ENCODE measurements at regions of chr19 and their contacts with region 1.

Region 1: DNA sequence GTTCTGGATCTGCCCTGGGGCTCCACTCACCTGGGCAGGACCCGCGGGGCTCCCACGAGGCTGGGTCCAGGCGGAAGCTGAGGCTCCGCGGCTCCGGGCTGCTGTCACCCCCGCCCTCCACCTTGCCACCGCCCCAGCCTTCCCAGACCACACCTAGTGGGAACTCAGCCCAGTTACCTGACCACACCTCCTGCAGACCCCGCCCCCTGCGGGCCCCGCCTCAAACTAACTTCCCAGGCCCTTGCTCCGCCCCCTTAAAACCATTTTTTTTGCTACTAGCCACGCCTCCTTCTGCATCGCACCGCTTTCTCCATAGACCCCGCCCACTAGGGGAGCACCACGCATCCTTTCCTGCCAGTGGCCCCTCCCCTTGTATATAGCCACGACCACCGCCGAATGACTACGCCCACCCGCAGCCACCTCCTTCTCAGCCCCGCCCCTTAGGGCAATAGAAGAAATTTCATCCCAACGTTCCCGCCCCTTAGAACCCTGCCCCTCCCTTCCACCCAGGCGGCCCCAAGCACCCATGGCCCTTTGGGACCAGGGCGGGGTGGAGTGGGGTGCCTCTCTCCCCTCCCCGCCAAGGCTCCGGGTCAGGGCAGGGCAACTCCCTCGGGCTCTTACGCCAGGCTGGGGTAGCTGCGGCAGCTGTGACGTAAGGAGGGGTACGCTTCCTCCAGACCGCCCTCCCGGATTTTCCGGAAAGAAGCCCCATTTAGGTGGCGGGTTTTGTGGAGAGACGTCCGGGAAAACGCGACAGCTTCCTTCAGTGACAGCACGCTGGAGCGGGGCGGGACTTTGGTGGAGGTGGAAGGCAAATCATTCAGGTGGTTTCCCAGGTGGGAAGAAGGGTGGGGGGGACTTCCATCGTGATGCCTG is at the start of gene SH2D3A:
- DNase-seq: peak; percentile 97
- H3K4me3 Mint-ChIP-seq: peak within 1 kb of the TSS; percentile 86
- H3K27ac Mint-ChIP-seq: peak within 1 kb of the TSS; percentile 90
- H3K4me1 Mint-ChIP-seq: peaks cover 60% of the 10 kb centered on the region
- H3K27me3 Mint-ChIP-seq: no peaks in the 10 kb centered on the region

Region 2: DNA sequence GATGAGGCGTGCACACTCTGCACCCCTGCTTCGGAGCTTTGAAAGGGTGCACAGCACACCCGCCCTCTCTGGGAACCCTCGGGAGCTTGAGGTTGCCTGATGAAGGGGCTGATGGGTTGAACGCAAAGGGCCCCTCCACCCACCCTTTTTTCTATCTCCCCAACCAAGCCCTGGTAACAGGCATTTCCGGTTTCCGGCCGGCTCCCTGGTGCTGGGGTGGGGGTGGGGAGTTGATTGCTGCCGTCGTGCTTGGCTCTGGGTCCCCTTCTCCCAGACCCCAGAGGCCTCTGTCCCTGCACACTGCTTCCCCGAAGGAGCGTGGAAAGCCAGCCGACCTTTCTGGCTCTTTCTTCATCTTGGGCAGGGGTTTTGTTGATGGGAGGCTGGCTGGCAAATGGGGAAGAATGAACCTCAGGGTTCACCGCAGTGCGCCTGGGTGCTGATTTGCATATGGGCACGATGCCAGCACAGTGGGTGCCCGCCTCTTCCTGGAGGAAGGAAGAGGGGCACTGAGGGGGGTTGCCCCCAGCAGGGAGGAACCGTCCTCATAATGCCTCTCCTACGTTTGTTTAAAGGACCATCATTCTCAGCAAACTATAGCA is 34.0 kb after region 1 on chr19:
- CTCF ChIA-PET with region 1: interaction called, 10 read pairs
- DNase-seq: peak; percentile 89
- H3K4me3 Mint-ChIP-seq: peak overlapping the region; percentile 76
- H3K27ac Mint-ChIP-seq: peak overlapping the region; percentile 94
- H3K4me1 Mint-ChIP-seq: peaks cover 67% of the 10 kb centered on the region
- H3K27me3 Mint-ChIP-seq: no peaks in the 10 kb centered on the region

Region 3: GRCh38 chr19:6862673-6863078 is 95.1 kb after region 1 on chr19:
- CTCF ChIA-PET with region 1: interaction called, 15 read pairs
- DNase-seq: peak; percentile 94
- H3K4me3 Mint-ChIP-seq: peak overlapping the region; percentile 75
- H3K27ac Mint-ChIP-seq: peak overlapping the region; percentile 86
- H3K4me1 Mint-ChIP-seq: peaks cover 27% of the 10 kb centered on the region
- H3K27me3 Mint-ChIP-seq: peaks cover 5% of the 10 kb centered on the region